Activated CD4-positive, alpha-beta T cell treated with anti-CD3 and anti-CD28 coated beads for 36 hours (primary cell): ENCODE measurements at regions of chr1 and their contacts with region 1.

Region 1: DNA sequence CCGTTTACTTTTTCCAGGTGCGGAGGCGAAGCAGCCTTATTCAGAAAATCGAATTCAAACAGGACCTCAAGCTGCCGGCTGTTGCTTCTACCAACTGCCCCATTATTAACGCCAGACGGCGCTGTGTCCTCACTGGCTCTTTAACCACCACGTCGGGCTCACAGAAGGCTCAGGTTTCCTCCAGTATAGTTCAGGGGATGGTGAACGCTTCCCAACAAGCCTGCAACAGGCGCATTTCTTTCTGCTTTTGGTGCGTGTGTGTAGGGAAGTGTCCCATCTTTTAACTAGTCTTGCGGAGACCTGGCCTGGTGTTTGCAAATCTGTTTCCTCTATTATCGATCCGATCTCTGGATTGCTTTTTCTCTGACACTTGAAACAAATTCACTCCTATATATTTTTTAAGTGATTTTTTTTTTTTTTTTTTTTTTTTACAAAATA is 791 bp upstream of the STUM start:
- DNase-seq: peak; percentile 82
- ATAC-seq: peak; percentile 70
- H3K4me3 Mint-ChIP-seq: no peak overlapping the region
- H3K27ac Mint-ChIP-seq: no peak overlapping the region
- H3K4me1 Mint-ChIP-seq: peaks cover 14% of the 10 kb centered on the region
- H3K27me3 Mint-ChIP-seq: peaks cover 38% of the 10 kb centered on the region

Region 2: DNA sequence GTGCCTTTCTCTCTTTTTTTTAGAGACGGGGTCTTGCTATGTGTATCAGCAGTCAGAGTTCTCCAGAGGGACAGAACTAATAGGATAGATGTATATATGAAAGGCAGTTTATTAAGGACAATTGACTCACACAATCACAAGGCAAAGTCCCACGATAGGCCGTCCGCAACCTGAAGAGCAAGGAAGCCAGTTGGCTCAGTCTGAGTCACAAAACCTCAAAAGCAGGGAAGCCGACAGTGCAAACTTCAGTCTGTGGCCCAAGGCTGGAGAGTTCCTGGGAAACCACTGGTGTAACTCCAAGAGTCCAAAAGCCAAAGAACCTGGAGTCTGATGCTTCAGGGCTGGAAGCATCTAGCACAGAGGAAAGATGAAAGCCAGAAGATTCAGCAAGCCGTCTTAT is 501.5 kb before region 1 on chr1:
- CTCF ChIA-PET with region 1: no interaction called
- POLR2A ChIA-PET with region 1: no interaction called
- intact Hi-C with region 1: no loop called
- DNase-seq: no peak
- ATAC-seq: no peak
- H3K4me3 Mint-ChIP-seq: no peak overlapping the region
- H3K27ac Mint-ChIP-seq: no peak overlapping the region
- H3K4me1 Mint-ChIP-seq: no peaks in the 10 kb centered on the region
- H3K27me3 Mint-ChIP-seq: no peaks in the 10 kb centered on the region

Region 3: GRCh38 chr1:226424228-226425003 is 123.4 kb before region 1 on chr1:
- CTCF ChIA-PET with region 1: interaction called, 7 read pairs
- POLR2A ChIA-PET with region 1: no interaction called
- intact Hi-C with region 1: loop called (anchors 1 to 2 kb)
- DNase-seq: peak; percentile 28
- ATAC-seq: peak; percentile 66
- H3K4me3 Mint-ChIP-seq: no peak overlapping the region
- H3K27ac Mint-ChIP-seq: no peak overlapping the region
- H3K4me1 Mint-ChIP-seq: peaks cover 22% of the 10 kb centered on the region
- H3K27me3 Mint-ChIP-seq: no peaks in the 10 kb centered on the region

Region 4: DNA sequence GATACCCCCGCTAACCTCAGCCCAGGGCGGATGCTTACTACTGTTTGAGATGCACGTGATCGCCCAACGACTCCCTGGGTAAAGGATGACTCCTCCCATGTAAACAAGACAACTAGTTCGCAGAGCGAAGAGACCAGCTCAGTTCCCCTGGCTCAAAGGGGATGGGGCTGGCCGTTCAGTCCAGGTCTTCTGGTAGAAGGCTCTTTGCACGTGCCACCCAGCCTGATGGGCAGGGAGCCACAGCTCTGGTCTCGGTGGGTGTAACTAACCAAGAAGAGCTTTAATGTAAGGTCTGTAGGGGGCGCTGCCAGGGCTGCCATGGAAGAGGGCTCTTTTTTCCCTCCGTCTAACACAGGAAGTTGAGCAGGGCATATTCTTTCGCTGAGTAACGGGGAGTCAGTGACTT is 90.5 kb before region 1 on chr1:
- CTCF ChIA-PET with region 1: no interaction called
- POLR2A ChIA-PET with region 1: no interaction called
- intact Hi-C with region 1: no loop called
- DNase-seq: peak; percentile 79
- ATAC-seq: peak; percentile 93
- H3K4me3 Mint-ChIP-seq: peak overlapping the region; percentile 55
- H3K27ac Mint-ChIP-seq: peak overlapping the region; percentile 76
- H3K4me1 Mint-ChIP-seq: peaks cover 12% of the 10 kb centered on the region
- H3K27me3 Mint-ChIP-seq: no peaks in the 10 kb centered on the region

Region 5: DNA sequence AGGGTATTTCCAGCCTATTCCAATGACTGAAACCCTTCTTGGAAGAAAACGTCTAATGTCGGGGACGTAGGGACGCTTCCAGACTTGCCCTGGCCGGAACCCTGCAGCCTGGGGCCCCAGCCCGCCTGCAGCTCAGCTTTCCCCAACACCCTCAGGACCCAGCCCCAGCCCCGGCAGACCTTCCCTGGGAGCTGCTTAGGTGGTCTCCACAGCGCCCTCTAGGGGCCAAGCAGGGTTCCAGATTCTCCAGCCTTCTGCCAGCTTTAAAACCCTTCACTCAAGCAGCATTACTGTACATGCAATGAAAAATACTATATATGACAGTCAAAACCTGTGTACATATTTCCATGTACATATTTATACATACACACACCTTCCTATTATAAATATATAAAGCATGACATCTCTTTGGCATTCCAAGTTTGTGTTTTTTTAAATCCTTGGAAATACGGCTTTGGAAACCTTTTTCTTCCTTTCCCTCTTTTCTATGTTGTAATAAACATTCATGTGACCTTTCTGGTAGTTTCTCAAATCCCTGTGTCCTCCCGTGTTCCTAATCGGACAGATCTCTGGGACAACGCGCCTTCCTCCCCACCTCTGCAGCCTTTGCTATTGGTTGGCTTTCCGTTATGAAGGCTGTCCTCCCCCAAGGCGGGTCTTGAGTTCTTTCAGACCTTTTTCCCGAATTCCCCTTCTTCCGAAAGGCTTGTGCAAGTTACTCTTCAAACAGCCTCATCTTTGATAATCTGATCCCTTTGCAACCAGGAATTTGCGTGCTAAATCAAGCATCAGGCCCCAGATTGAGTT is 61.1 kb after region 1 on chr1:
- CTCF ChIA-PET with region 1: interaction called, 5 read pairs
- POLR2A ChIA-PET with region 1: no interaction called
- intact Hi-C with region 1: loop called in 1 of 2 experiments (anchors 1 kb)
- DNase-seq: peak; percentile 85
- ATAC-seq: peak; percentile 89
- H3K4me3 Mint-ChIP-seq: no peak overlapping the region
- H3K27ac Mint-ChIP-seq: no peak overlapping the region
- H3K4me1 Mint-ChIP-seq: no peaks in the 10 kb centered on the region
- H3K27me3 Mint-ChIP-seq: no peaks in the 10 kb centered on the region

Region 6: GRCh38 chr1:227318003-227318852 is 770.5 kb after region 1 on chr1 and contains the start of gene CDC42BPA:
- CTCF ChIA-PET with region 1: no interaction called
- POLR2A ChIA-PET with region 1: no interaction called
- intact Hi-C with region 1: loop called in 1 of 2 experiments (anchors 5 kb)
- DNase-seq: peak; percentile 72
- ATAC-seq: peak; percentile 86
- H3K4me3 Mint-ChIP-seq: peak within 1 kb of the TSS; percentile 85
- H3K27ac Mint-ChIP-seq: peak within 1 kb of the TSS; percentile 87
- H3K4me1 Mint-ChIP-seq: peaks cover 2% of the 10 kb centered on the region
- H3K27me3 Mint-ChIP-seq: peaks cover 36% of the 10 kb centered on the region
- total RNA-seq, gene CDC42BPA: 6.0 to 7.8 TPM

Region 7: DNA sequence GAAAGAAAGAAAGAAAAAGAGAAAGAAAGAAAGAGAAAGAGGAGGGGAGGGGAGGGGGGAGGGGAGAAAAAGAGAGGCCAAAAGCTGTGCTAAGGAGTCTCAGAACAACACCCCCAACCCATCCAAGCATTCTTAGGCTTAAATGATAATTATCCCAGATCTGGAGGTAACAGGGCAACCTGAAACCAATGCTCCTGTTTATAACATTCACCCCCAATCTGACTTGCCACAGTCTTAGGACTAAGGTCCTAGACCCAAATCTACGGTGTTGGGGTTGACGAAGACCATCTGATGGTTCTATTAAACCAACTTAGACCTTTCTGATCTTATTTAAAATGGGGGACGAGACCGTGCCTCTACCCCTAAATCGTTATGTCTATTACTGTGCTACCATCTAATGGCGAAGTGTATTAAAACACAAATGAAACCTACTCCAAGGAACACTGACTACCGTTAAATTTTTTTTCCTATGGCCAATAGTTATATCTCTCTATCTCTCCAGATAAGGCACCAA is 889.8 kb after region 1 on chr1:
- CTCF ChIA-PET with region 1: no interaction called
- POLR2A ChIA-PET with region 1: no interaction called
- intact Hi-C with region 1: loop called in 1 of 2 experiments (anchors 5 kb)
- DNase-seq: no peak
- ATAC-seq: no peak
- H3K4me3 Mint-ChIP-seq: no peak overlapping the region
- H3K27ac Mint-ChIP-seq: no peak overlapping the region
- H3K4me1 Mint-ChIP-seq: no peaks in the 10 kb centered on the region
- H3K27me3 Mint-ChIP-seq: peaks cover 24% of the 10 kb centered on the region